HepG2 (cell line): ENCODE measurements at regions of chr11 and their contacts with region 1.

Region 1: GRCh38 chr11:74570266-74571061 is 21.9 kb upstream of the POLD3 start:
- DNase-seq: peak; percentile 57
- ATAC-seq: peak; percentile 92
- H3K4me3 ChIP-seq: no peak overlapping the region
- H3K27ac ChIP-seq: no peak overlapping the region
- H3K4me1 ChIP-seq: peaks cover 25% of the 10 kb centered on the region
- H3K27me3 ChIP-seq: peaks cover 0 to 2% of the 10 kb centered on the region in 2 experiments; a peak in 2 of 5 replicates
- CTCF ChIP-seq: peak; percentile 84
- EP300 ChIP-seq: no peak
- POLR2A ChIP-seq: no peak
- RAD21 ChIP-seq: peak; percentile 73

Region 2: DNA sequence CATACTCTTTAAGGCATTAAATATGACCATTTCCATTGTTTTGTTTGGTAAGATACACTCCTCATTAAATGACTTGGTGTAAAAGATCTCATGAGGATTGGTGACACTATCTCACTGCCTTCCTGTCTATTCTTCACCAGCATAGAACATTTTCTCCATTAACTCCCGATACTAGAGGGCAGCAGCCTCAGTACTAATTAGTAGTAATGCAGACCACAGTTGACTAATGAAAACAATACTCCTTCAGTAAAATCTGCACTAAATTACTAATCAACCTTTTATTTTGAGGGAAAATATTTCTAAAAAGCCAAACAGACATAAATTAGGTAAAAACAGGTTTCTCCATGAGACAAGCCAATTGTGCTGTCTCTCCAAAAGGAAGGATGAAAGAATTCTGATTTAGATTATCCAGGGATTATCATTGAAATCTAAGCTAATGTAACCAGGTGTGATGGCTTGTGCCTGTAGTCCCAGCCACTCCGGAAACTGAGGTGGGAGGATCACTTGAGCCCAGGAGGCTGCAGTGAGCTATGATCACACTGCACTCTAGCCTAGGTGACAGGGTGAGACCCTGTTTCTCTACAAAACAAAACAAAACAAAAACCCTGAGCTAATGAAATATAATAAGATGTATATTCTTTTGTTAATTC is 181.7 kb before region 1 on chr11:
- CTCF ChIA-PET with region 1: interaction called, 4 read pairs
- POLR2A ChIA-PET with region 1: no interaction called
- in situ Hi-C with region 1: no loop called
- intact Hi-C with region 1: loop called (anchors 2 kb)
- DNase-seq: peak; percentile 42
- ATAC-seq: peak; percentile 68
- H3K4me3 ChIP-seq: no peak overlapping the region
- H3K27ac ChIP-seq: no peak overlapping the region
- H3K4me1 ChIP-seq: peaks cover 9% of the 10 kb centered on the region
- H3K27me3 ChIP-seq: no peaks in the 10 kb centered on the region; a peak in 1 of 5 replicates
- CTCF ChIP-seq: peak; percentile 76
- EP300 ChIP-seq: no peak
- POLR2A ChIP-seq: no peak
- RAD21 ChIP-seq: no peak

Region 3: GRCh38 chr11:74487875-74488274 is 82.6 kb before region 1 on chr11:
- CTCF ChIA-PET with region 1: interaction called, 17 read pairs
- POLR2A ChIA-PET with region 1: no interaction called
- in situ Hi-C with region 1: no loop called
- intact Hi-C with region 1: loop called (anchors 1 kb)
- DNase-seq: peak; percentile 54
- ATAC-seq: peak; percentile 94
- H3K4me3 ChIP-seq: no peak overlapping the region
- H3K27ac ChIP-seq: no peak overlapping the region
- H3K4me1 ChIP-seq: peaks cover 22% of the 10 kb centered on the region
- H3K27me3 ChIP-seq: no peaks in the 10 kb centered on the region
- CTCF ChIP-seq: peak; percentile 66
- EP300 ChIP-seq: no peak
- POLR2A ChIP-seq: no peak
- RAD21 ChIP-seq: 0 out of 2 replicates have a peak, but pooled peaks have one; percentile 40